Panc1 (cell line): ENCODE measurements at regions of chr2 and their contacts with region 1.

Region 1: DNA sequence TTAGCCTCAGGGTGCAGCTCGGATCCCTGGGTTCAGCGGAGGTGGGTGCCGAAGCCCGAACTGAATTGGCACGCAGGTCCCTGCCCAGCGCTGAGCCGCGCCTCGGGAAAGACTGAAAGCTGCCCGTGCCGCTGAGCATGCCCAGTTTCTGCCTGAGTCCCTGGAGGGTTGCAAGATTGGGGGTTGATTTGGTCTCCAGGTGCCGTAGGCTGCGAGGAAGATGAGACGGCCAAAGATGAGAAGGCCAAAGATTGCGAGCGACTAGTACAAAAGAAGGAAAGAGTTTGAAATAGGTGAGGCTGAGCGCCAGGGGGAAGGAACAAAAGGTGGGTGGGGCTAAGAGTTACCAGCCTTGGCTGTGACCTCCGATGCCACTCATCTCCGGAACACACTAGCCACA is 852 bp upstream of the KCNH7 start:
- DNase-seq: no peak
- ATAC-seq: peak; percentile 84
- H3K4me3 ChIP-seq: peak overlapping the region; percentile 37 to 62
- H3K27ac ChIP-seq: no peak overlapping the region
- H3K4me1 ChIP-seq: no peaks in the 10 kb centered on the region
- H3K27me3 ChIP-seq: no peaks in the 10 kb centered on the region
- CTCF ChIP-seq: no peak

Region 2: GRCh38 chr2:162318328-162319180 is 520.9 kb before region 1 on chr2 and contains the start of gene IFIH1:
- CTCF ChIA-PET with region 1: no interaction called
- POLR2A ChIA-PET with region 1: no interaction called
- in situ Hi-C with region 1: no loop called
- intact Hi-C with region 1: no loop called
- DNase-seq: peak; percentile 71
- ATAC-seq: peak; percentile 96
- H3K4me3 ChIP-seq: peak within 1 kb of the TSS; percentile 84 to 95
- H3K27ac ChIP-seq: peak within 1 kb of the TSS; percentile 95
- H3K4me1 ChIP-seq: peaks cover 6% of the 10 kb centered on the region
- H3K27me3 ChIP-seq: no peaks in the 10 kb centered on the region
- CTCF ChIP-seq: peak; percentile 58
- total RNA-seq, gene IFIH1: 15.4 TPM

Region 3: DNA sequence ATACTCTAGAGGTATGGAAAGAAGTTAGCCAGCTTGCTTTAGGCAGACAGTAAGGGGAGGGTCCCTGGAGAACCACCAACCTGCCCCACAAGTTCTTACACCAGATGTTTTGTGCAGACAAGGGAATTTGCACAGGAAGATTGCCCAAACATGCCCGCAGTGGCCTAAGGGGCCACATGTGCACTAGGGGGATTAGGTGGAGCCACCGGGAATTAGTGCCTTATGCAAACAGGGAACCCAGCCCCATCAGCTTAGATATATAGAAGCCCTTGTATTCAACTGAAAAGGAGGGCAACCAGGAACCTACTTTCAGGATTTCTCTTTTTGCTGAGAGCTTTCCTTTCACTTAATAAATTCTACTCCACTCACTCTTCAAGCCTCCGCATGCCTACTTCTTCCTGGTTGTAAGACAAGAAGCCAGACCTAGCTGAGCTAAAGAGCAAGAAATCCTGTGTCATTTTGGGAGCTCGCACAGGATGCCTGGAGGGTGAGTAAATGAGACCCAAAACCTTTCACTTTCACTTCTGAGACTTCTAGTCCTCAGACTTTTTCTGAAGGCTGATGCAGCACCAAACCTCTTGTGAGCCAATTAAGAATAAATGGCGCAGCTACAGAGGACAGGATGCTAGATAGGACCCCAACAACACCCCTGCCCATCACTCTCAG is 349.2 kb before region 1 on chr2:
- CTCF ChIA-PET with region 1: no interaction called
- POLR2A ChIA-PET with region 1: interaction called, 10 read pairs
- in situ Hi-C with region 1: no loop called
- intact Hi-C with region 1: no loop called
- DNase-seq: no peak
- ATAC-seq: no peak
- H3K4me3 ChIP-seq: no peak overlapping the region
- H3K27ac ChIP-seq: no peak overlapping the region
- H3K4me1 ChIP-seq: no peaks in the 10 kb centered on the region
- H3K27me3 ChIP-seq: no peaks in the 10 kb centered on the region
- CTCF ChIP-seq: no peak